Dorsolateral prefrontal cortex (tissue), 120 donors: ENCODE measurements at regions of chr4 and their contacts with region 1.

Region 1: DNA sequence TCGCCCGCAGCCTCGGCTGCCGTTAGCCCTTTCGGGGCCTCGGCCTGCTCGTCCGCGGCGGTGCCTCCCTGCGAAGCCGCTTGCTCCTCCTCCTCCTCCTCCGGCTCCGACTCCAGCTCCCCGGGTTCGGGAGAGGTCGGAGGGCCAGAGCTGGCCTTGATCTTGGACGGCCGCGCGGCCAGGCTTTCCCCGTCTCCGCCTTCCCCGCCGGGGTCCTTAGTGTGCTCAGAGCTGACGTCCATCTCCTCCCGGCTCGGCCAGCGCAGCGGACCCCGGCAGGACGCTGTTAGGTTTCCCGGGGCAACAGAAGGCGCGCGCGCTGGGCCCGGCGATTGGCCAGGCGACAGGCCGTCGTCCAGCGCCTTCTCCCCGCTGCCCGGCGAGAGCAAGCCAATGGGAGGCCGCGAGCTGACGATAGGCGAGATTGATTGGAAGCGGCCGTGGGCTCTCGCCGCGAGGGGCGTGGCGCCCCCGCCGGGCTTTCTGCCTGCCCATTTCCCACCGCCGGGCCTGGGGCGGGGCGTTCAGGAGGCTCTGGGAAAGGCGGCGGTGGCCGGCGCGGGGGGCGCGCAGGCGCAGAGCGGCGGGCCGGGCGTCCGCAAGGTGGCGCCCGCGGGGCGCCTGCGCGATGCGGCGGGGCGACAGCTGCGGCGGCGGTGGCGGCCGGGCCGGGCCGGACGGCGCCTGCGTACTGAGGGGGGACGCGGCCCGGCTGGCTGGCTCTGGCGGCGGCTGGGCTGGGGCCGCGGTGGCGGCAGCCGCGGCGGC is at the start of gene TADA2B:
- DNase-seq: peak; percentile 91 to 98 (median 97)
- H3K4me3 ChIP-seq: peak within 1 kb of the TSS; percentile 74 to 100 (median 97)
- H3K27ac ChIP-seq: peak within 1 kb of the TSS in 56 of 59 donors; percentile 53 to 95 (median 82)
- H3K27me3 ChIP-seq: no peaks in the 10 kb centered on the region
- CTCF ChIP-seq: peak in 52 of 56 donors; percentile 7 to 73 (median 51)
- total RNA-seq, gene TADA2B: 19.6 to 36.0 (median 26.7) TPM

Region 2: DNA sequence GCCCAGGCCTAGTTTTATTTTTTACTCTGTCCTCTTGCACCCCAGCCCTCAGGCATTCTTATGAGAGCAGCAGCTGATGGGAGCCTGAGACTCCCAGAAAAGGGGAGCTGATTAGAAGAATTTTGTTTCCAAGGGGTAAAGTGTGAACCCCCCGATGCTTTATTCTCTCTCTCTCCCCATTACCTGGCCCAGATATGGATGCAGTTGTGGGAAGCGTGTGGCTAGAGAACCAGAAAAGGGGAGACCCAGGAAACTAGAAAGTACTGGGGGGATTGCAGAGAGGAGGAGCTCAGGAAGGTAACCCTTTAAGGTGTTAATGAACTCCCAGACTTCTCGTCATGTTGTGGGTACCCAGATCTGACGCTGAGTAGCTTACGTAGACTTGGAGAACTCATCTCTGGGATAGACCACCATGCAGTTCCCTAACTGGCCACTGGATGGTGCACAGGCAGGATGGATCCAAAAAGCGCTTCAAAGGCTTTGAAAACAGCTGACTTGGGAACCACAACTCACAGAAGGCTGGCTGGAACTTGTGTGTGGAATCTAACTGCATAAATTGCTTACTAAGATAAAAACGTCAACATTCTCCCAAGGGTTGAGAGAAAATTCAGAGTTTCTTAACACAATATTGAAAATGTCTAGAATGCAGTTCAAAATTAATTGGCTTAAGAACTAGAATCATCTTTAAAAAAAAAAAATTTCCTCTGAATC is 68.6 kb before region 1 on chr4:
- intact Hi-C with region 1: loop called in 1 of 2 experiments (anchors 5 kb)
- DNase-seq: peak; percentile 70 to 90 (median 82)
- H3K4me3 ChIP-seq: peak overlapping the region in 3 of 59 donors; percentile 15 to 18 (median 15)
- H3K27ac ChIP-seq: peak overlapping the region in 7 of 59 donors; percentile 6 to 61 (median 23)
- H3K27me3 ChIP-seq: no peaks in the 10 kb centered on the region
- CTCF ChIP-seq: peak; percentile 91 to 99 (median 98)

Region 3: DNA sequence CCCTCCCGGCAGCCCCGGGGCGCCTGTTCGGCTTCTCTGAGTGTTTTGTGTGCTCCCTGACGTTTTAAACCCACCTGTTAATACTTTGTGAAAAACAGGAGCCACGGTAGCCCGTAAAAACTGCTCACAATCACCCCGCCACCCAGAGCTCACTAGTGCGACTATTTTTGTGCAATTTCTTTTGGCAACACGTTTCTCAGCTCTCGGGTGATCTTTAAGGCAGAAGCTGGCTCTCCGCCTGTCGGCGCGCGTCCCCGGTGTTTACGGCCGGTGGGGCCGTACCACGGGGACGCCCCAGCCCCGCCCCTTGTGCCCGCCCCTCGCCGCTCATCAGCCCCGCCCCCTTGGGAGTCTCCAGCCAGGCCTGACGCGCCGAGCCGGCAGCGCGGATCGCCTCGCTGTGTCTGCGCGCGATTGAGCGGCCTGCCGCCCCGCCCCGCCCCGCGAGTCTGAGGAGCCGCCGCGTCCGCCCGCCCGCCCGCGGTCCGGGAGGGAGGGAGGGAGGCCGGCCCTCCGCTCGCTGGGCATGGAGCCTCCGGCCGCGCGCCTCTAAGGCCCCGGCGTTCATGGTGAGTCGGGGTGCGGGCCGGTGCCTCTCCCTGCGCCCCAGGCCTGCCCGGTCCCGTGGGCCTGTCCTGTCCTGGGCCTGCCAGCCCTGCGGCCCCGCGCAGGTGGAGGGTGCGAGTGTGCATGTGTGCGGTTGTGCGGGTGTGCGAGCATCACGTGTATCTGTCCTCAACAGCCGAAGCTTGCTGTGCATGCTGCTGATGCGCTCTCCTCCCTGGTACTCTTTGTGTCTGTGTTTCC is 55.9 kb before region 1 on chr4:
- intact Hi-C with region 1: loop called (anchors 2 kb)
- DNase-seq: peak; percentile 91 to 98 (median 95)
- H3K4me3 ChIP-seq: peak overlapping the region; percentile 59 to 98 (median 91)
- H3K27ac ChIP-seq: peak overlapping the region; percentile 59 to 99 (median 96)
- H3K27me3 ChIP-seq: no peaks in the 10 kb centered on the region
- CTCF ChIP-seq: peak in 26 of 56 donors; percentile 7 to 56 (median 32)

Region 4: DNA sequence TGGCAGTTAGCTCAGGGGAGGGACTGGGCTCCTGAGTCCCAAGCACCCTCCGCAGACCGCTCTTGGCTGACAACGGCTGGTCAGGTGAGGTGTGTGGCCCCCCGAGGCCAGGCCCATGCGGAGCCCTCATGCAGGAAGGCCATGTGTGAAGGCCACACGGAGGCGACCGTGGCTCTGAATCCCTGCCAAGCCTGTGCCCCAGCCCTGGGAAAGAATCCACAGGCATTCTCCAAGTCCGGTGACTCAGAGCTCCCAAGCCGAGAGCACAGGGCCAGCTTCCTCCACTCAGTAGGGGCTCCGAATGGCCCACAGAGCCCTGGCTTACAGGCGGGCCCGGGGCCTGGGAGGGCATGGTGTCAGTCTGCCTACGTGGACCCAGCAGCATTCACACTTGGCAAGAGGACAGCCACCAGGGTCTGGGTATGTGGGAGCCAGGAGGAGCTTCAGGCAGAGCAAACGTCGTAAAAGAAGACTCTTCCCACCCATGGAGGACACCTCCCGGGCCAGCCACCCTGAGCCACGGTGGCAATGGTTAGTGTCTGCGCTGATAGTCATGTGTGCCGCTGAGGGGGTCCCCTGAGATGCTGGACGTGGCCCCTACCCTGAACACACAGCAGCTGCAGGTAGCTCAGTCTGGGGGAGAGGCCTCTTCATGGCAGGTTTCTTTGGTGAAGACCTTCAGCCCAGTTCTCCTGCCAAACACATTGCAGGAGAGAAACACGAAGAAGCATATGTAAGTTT is 286.2 kb after region 1 on chr4:
- intact Hi-C with region 1: no loop called
- DNase-seq: peak in 7 of 10 donors; percentile 46 to 81 (median 61)
- H3K4me3 ChIP-seq: no peak overlapping the region
- H3K27ac ChIP-seq: peak overlapping the region in 27 of 59 donors; percentile 6 to 94 (median 53)
- H3K27me3 ChIP-seq: no peaks in the 10 kb centered on the region
- CTCF ChIP-seq: peak in 8 of 56 donors; percentile 5 to 30 (median 22)